GM12878 (cell line): ENCODE measurements at regions of chr3 and their contacts with region 1.

Region 1: DNA sequence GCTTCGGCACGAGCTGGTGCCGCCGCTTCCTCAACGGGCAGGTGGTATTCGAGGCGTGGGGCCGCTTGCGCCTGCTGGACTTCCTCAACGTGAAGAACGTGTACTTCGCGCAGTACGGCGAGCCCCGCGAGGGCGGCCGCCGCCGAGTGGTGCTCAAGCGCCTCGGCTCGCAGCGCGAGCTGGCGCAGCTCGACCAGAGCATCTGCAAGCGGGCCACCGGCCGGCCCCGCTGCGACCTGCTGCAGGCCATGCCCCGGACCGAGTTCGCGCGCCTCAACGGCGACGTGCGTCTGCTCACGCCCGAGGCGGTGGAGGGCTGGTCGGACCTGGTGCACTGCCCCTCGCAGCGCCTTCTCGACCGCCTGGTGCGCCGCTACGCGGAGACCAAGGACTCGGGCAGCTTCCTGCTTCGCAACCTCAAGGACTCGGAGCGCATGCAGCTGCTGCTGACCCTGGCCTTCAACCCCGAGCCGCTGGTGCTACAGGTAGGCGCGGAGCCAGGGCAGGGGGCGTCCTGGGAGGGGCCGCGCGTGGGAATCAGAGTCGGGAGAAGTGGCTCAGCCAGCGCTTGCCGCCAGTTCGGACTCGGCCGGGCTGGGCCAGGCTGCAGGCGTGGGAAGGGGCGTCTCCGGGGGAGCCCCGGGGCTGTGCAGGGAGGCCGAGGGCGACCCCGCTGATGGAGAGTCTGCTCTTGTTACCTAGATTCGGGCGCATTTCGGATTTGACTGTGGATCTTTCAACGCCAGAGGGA is 1.1 kb downstream of the DIPK2A start:
- DNase-seq: no peak
- ATAC-seq: peak; percentile 62
- H3K4me3 ChIP-seq: peak overlapping the region; percentile 87
- H3K27ac ChIP-seq: peak overlapping the region; percentile 91
- H3K4me1 ChIP-seq: no peaks in the 10 kb centered on the region
- H3K27me3 ChIP-seq: no peaks in the 10 kb centered on the region
- CTCF ChIP-seq: peak; percentile 25 to 48 (median 44); a peak in 4 of 6 replicates
- EP300 ChIP-seq: no peak
- POLR2A ChIP-seq: peak; percentile 62
- RAD21 ChIP-seq: peak; percentile 24; the same call in 1 of the 2 replicates

Region 2: GRCh38 chr3:143736205-143736997 is 236.3 kb before region 1 on chr3:
- CTCF ChIA-PET with region 1: no interaction called
- POLR2A ChIA-PET with region 1: no interaction called
- RAD21 ChIA-PET with region 1: no interaction called
- SMC1A ChIA-PET with region 1: no interaction called
- in situ Hi-C with region 1: no loop called
- intact Hi-C with region 1: no loop called
- DNase-seq: no peak
- ATAC-seq: no peak
- H3K4me3 ChIP-seq: no peak overlapping the region
- H3K27ac ChIP-seq: no peak overlapping the region
- H3K4me1 ChIP-seq: no peaks in the 10 kb centered on the region
- H3K27me3 ChIP-seq: no peaks in the 10 kb centered on the region
- CTCF ChIP-seq: no peak
- EP300 ChIP-seq: no peak
- POLR2A ChIP-seq: no peak
- RAD21 ChIP-seq: no peak

Region 3: GRCh38 chr3:144028798-144029411 is 56.2 kb after region 1 on chr3:
- CTCF ChIA-PET with region 1: interaction called, 14 read pairs
- POLR2A ChIA-PET with region 1: interaction called, 4 read pairs
- RAD21 ChIA-PET with region 1: interaction called, 6 read pairs
- SMC1A ChIA-PET with region 1: interaction called, 53 read pairs
- in situ Hi-C with region 1: no loop called
- intact Hi-C with region 1: loop called (anchors 2 kb)
- DNase-seq: peak; percentile 72
- ATAC-seq: peak; percentile 93
- H3K4me3 ChIP-seq: no peak overlapping the region
- H3K27ac ChIP-seq: peak overlapping the region; percentile 77
- H3K4me1 ChIP-seq: peaks cover 33% of the 10 kb centered on the region
- H3K27me3 ChIP-seq: no peaks in the 10 kb centered on the region
- CTCF ChIP-seq: peak in 1 of 3 experiments; percentile 24; a peak in 1 of 6 replicates
- EP300 ChIP-seq: peak; percentile 86 to 99
- POLR2A ChIP-seq: no peak
- RAD21 ChIP-seq: no peak

Region 4: GRCh38 chr3:144294659-144295538 is 322.2 kb after region 1 on chr3:
- CTCF ChIA-PET with region 1: interaction called, 4 read pairs
- POLR2A ChIA-PET with region 1: no interaction called
- RAD21 ChIA-PET with region 1: interaction called, 3 read pairs
- SMC1A ChIA-PET with region 1: interaction called, 3 read pairs
- in situ Hi-C with region 1: no loop called
- intact Hi-C with region 1: loop called (anchors 2 kb)
- DNase-seq: peak; percentile 66
- ATAC-seq: peak; percentile 87
- H3K4me3 ChIP-seq: no peak overlapping the region
- H3K27ac ChIP-seq: peak overlapping the region; percentile 61
- H3K4me1 ChIP-seq: peaks cover 16% of the 10 kb centered on the region
- H3K27me3 ChIP-seq: no peaks in the 10 kb centered on the region
- CTCF ChIP-seq: no peak
- EP300 ChIP-seq: peak; percentile 30 to 62; a peak in 2 of 4 replicates
- POLR2A ChIP-seq: no peak
- RAD21 ChIP-seq: peak; percentile 26; the same call in 1 of the 2 replicates

Region 5: GRCh38 chr3:144491333-144491732 is 518.7 kb after region 1 on chr3:
- CTCF ChIA-PET with region 1: no interaction called
- POLR2A ChIA-PET with region 1: no interaction called
- RAD21 ChIA-PET with region 1: no interaction called
- SMC1A ChIA-PET with region 1: no interaction called
- in situ Hi-C with region 1: no loop called
- intact Hi-C with region 1: loop called (anchors 10 kb)
- DNase-seq: no peak
- ATAC-seq: no peak
- H3K4me3 ChIP-seq: no peak overlapping the region
- H3K27ac ChIP-seq: no peak overlapping the region
- H3K4me1 ChIP-seq: no peaks in the 10 kb centered on the region
- H3K27me3 ChIP-seq: no peaks in the 10 kb centered on the region
- CTCF ChIP-seq: no peak
- EP300 ChIP-seq: no peak
- POLR2A ChIP-seq: no peak
- RAD21 ChIP-seq: no peak

Region 6: DNA sequence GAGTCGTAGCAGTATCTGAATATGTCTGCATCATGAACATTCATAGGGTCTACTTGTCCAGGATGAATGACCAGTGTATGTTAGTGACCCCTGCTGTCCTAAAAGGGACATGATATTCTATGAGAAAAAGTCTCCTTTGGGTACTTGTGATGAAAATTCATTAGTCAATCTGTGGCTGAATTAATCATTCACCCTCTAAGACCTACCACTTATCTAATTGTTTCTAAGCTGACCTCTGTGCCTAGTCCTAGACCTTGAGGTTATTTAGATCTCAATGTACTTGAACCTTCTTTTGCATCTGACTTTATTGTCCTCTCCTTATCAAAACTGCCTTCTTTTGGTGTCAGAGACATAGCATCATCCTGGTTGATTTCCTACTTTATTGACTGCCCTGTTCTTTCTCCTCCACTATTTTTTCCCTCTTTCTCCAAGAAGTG is 798.3 kb after region 1 on chr3:
- CTCF ChIA-PET with region 1: no interaction called
- POLR2A ChIA-PET with region 1: no interaction called
- RAD21 ChIA-PET with region 1: no interaction called
- SMC1A ChIA-PET with region 1: interaction called, 3 read pairs
- in situ Hi-C with region 1: no loop called
- intact Hi-C with region 1: loop called (anchors 2 kb)
- DNase-seq: no peak
- ATAC-seq: peak; percentile 62
- H3K4me3 ChIP-seq: no peak overlapping the region
- H3K27ac ChIP-seq: no peak overlapping the region
- H3K4me1 ChIP-seq: no peaks in the 10 kb centered on the region
- H3K27me3 ChIP-seq: no peaks in the 10 kb centered on the region
- CTCF ChIP-seq: peak in 2 of 3 experiments; percentile 21 to 32; a peak in 2 of 6 replicates
- EP300 ChIP-seq: no peak
- POLR2A ChIP-seq: no peak
- RAD21 ChIP-seq: peak; percentile 61